Prostate gland (tissue), 2 donors: ENCODE measurements at regions of chr1 and their contacts with region 1.

Region 1: DNA sequence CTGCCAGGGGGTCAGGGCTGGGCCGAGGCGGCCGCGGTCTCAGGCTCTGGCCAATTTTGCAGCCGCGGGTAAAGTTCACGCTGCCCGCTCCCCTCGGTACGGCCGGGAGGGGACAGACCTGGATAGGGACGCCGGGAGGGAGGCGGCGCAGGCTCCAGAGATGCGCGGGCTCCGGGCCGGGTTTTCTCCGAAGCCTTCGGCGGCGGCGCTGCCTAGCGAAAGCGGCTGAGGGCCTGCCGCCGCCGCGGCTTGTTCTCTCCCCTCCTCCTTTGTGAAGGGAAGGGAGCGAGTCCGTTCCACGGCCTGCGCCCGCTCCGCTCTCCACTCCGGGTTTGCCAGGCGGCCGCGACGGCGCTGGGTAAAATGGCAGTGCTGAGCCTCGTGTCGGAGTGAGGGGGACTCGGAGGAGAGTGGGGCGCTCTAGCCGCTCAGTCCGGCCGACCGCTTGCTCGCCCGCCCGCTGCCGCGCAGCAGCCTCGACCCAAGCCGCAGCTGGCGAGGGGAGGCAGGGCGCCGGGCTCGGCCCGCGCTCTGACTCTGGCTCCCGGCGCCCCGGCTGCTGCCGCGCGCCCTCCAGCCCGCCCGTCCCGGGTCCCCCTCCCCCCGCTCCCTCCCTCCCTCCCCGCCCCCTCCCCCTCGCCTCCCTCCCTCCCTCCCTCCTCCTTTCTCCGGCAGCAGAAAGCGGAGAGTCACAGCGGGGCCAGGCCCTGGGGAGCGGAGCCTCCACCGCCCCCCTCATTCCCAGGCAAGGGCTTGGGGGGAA is at the start of gene ARID1A:
- DNase-seq: peak; percentile 92
- H3K4me3 ChIP-seq: peak within 1 kb of the TSS; percentile 89 to 95
- H3K27ac ChIP-seq: peak within 1 kb of the TSS; percentile 91 to 99
- H3K4me1 ChIP-seq: peaks cover 21% of the 10 kb centered on the region
- H3K27me3 ChIP-seq: no peaks in the 10 kb centered on the region
- CTCF ChIP-seq: peak in 2 of 4 experiments; percentile 28 to 44
- POLR2A ChIP-seq: peak; percentile 67
- total RNA-seq, gene ARID1A: 71.4 to 92.8 TPM

Region 2: GRCh38 chr1:26608895-26609294 is 86.6 kb before region 1 on chr1:
- intact Hi-C with region 1: no loop called
- DNase-seq: no peak
- H3K4me3 ChIP-seq: no peak overlapping the region
- H3K27ac ChIP-seq: no peak overlapping the region
- H3K4me1 ChIP-seq: no peaks in the 10 kb centered on the region
- H3K27me3 ChIP-seq: no peaks in the 10 kb centered on the region
- CTCF ChIP-seq: no peak
- POLR2A ChIP-seq: no peak

Region 3: GRCh38 chr1:26733982-26734381 is 38.4 kb after region 1 on chr1:
- intact Hi-C with region 1: loop called (anchors 5 kb)
- DNase-seq: no peak
- H3K4me3 ChIP-seq: no peak overlapping the region
- H3K27ac ChIP-seq: peak overlapping the region in 1 of 2 donors; percentile 13
- H3K4me1 ChIP-seq: peaks cover 15% of the 10 kb centered on the region
- H3K27me3 ChIP-seq: no peaks in the 10 kb centered on the region
- CTCF ChIP-seq: no peak
- POLR2A ChIP-seq: no peak

Region 4: GRCh38 chr1:26864610-26865527 is 169.3 kb after region 1 on chr1:
- intact Hi-C with region 1: loop called (anchors 10 kb)
- DNase-seq: peak; percentile 97
- H3K4me3 ChIP-seq: peak overlapping the region; percentile 39 to 59
- H3K27ac ChIP-seq: peak overlapping the region; percentile 99
- H3K4me1 ChIP-seq: peaks cover 7% of the 10 kb centered on the region
- H3K27me3 ChIP-seq: no peaks in the 10 kb centered on the region
- CTCF ChIP-seq: peak in 2 of 4 experiments; percentile 44 to 52
- POLR2A ChIP-seq: peak; percentile 95